ENCODE measurements at regions of chr1 and their contacts with region 1.

Region 1: GRCh38 chr1:230385158-230385450 is 41.0 kb downstream of the PGBD5 start:
- DNase-seq: no peak

Region 2: GRCh38 chr1:230972855-230973271 is 587.8 kb after region 1 on chr1:
- intact Hi-C with region 1: loop called in 1 of 2 experiments (anchors 5 kb)
- DNase-seq: no peak